ENCODE measurements at regions of chr11 and their contacts with region 1.

Region 1: GRCh38 chr11:111601979-111602864 is at the start of gene SIK2:
- DNase-seq: peak; percentile 99 to 100
- H3K4me3 ChIP-seq: peak within 1 kb of the TSS; percentile 87
- H3K4me3 Mint-ChIP-seq: peak within 1 kb of the TSS; percentile 97
- H3K27ac Mint-ChIP-seq: peak within 1 kb of the TSS; percentile 95
- H3K4me1 ChIP-seq: peaks cover 21% of the 10 kb centered on the region
- H3K4me1 Mint-ChIP-seq: peaks cover 29% of the 10 kb centered on the region
- H3K27me3 ChIP-seq: no peaks in the 10 kb centered on the region
- H3K27me3 Mint-ChIP-seq: peaks cover 5% of the 10 kb centered on the region
- CTCF ChIP-seq: peak; percentile 97 to 100
- total RNA-seq, gene SIK2: 37.3 and 40.2 TPM in 2 replicates

Region 2: GRCh38 chr11:111259896-111260295 is 342.3 kb before region 1 on chr11:
- CTCF ChIA-PET with region 1: no interaction called
- POLR2A ChIA-PET with region 1: no interaction called
- intact Hi-C with region 1: no loop called
- DNase-seq: no peak
- H3K4me3 ChIP-seq: no peak overlapping the region
- H3K4me3 Mint-ChIP-seq: no peak overlapping the region
- H3K27ac Mint-ChIP-seq: no peak overlapping the region
- H3K4me1 ChIP-seq: no peaks in the 10 kb centered on the region
- H3K4me1 Mint-ChIP-seq: no peaks in the 10 kb centered on the region
- H3K27me3 ChIP-seq: no peaks in the 10 kb centered on the region
- H3K27me3 Mint-ChIP-seq: peaks cover 28% of the 10 kb centered on the region
- CTCF ChIP-seq: no peak

Region 3: GRCh38 chr11:111637885-111638284 is 35.7 kb after region 1 on chr11:
- CTCF ChIA-PET with region 1: no interaction called
- POLR2A ChIA-PET with region 1: interaction called, 13 read pairs
- intact Hi-C with region 1: no loop called
- DNase-seq: no peak
- H3K4me3 ChIP-seq: no peak overlapping the region
- H3K4me3 Mint-ChIP-seq: no peak overlapping the region
- H3K27ac Mint-ChIP-seq: no peak overlapping the region
- H3K4me1 ChIP-seq: peaks cover 24% of the 10 kb centered on the region
- H3K4me1 Mint-ChIP-seq: peaks cover 47% of the 10 kb centered on the region
- H3K27me3 ChIP-seq: no peaks in the 10 kb centered on the region
- H3K27me3 Mint-ChIP-seq: no peaks in the 10 kb centered on the region
- CTCF ChIP-seq: no peak

Region 4: GRCh38 chr11:111707039-111707690 is 104.9 kb after region 1 on chr11:
- CTCF ChIA-PET with region 1: no interaction called
- POLR2A ChIA-PET with region 1: no interaction called
- intact Hi-C with region 1: loop called (anchors 1 kb)
- DNase-seq: peak; percentile 63 to 73
- H3K4me3 ChIP-seq: no peak overlapping the region
- H3K4me3 Mint-ChIP-seq: no peak overlapping the region
- H3K27ac Mint-ChIP-seq: no peak overlapping the region
- H3K4me1 ChIP-seq: peaks cover 5% of the 10 kb centered on the region; the same call in 1 of the 2 replicates
- H3K4me1 Mint-ChIP-seq: peaks cover 16% of the 10 kb centered on the region
- H3K27me3 ChIP-seq: no peaks in the 10 kb centered on the region
- H3K27me3 Mint-ChIP-seq: no peaks in the 10 kb centered on the region
- CTCF ChIP-seq: no peak

Region 5: GRCh38 chr11:111777094-111778046 is 175.1 kb after region 1 on chr11:
- CTCF ChIA-PET with region 1: interaction called, 17 read pairs
- POLR2A ChIA-PET with region 1: interaction called, 4 read pairs
- intact Hi-C with region 1: loop called (anchors 1 kb)
- DNase-seq: peak; percentile 54 to 71
- H3K4me3 ChIP-seq: no peak overlapping the region
- H3K4me3 Mint-ChIP-seq: peak overlapping the region; percentile 4
- H3K27ac Mint-ChIP-seq: peak overlapping the region; percentile 39
- H3K4me1 ChIP-seq: peaks cover 17% of the 10 kb centered on the region
- H3K4me1 Mint-ChIP-seq: peaks cover 17% of the 10 kb centered on the region
- H3K27me3 ChIP-seq: no peaks in the 10 kb centered on the region
- H3K27me3 Mint-ChIP-seq: no peaks in the 10 kb centered on the region
- CTCF ChIP-seq: peak; percentile 95 to 96

Region 6: DNA sequence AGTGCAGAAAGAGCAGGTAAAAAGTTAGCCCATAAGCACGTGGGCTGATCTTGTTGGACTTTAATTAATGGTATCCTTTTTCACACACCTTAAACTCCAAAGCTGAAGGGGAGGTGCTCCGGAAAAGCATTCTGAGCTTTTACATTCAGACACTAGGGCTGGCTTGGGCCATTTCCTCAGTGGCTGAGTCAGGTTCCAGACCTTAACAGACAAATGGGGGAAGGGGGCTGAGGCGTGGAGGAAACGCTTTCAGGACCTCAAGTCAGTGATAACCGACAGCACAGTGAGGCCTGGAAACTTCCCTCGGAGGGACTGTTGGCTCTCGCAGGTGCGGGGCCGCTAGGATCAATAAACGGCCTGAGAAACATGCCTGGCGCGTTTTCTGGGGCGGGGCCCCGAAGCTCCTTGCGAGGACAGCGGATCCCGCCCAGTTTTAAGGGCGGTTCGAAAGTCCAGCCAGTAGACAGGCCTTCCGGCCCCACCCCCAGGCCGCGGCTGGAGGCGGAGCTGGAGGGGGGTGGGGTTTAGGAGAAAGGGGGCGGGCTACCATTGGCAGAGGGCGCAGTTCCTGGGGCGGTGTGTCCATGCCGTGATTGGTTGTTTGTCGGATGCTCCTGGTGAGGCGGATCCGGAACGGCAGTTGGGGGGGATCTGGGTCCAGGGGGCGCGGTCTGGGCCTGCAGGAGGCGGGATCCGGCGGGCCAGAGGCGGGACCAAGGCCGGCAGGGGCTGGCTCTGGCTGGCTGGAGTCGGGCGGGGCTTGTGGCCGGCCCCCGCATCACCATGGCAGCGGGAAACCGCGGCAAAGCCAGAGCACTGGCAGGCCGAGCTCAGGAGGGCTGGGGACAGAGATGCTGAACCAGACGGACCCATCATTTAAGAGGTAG is 324.5 kb after region 1 on chr11:
- CTCF ChIA-PET with region 1: interaction called, 4 read pairs
- POLR2A ChIA-PET with region 1: no interaction called
- intact Hi-C with region 1: loop called (anchors 5 kb)
- DNase-seq: peak; percentile 99 to 100
- H3K4me3 ChIP-seq: peak overlapping the region; percentile 30
- H3K4me3 Mint-ChIP-seq: peak overlapping the region; percentile 78
- H3K27ac Mint-ChIP-seq: peak overlapping the region; percentile 96
- H3K4me1 ChIP-seq: peaks cover 21% of the 10 kb centered on the region
- H3K4me1 Mint-ChIP-seq: peaks cover 39% of the 10 kb centered on the region
- H3K27me3 ChIP-seq: no peaks in the 10 kb centered on the region
- H3K27me3 Mint-ChIP-seq: no peaks in the 10 kb centered on the region
- CTCF ChIP-seq: no peak

Measured in Caco-2 (cell line).